Caki2 (cell line): ENCODE measurements at regions of chr7 and their contacts with region 1.

Region 1: GRCh38 chr7:26199301-26200037 is 1.1 kb downstream of the HNRNPA2B1 start:
- DNase-seq: peak; percentile 60

Region 2: DNA sequence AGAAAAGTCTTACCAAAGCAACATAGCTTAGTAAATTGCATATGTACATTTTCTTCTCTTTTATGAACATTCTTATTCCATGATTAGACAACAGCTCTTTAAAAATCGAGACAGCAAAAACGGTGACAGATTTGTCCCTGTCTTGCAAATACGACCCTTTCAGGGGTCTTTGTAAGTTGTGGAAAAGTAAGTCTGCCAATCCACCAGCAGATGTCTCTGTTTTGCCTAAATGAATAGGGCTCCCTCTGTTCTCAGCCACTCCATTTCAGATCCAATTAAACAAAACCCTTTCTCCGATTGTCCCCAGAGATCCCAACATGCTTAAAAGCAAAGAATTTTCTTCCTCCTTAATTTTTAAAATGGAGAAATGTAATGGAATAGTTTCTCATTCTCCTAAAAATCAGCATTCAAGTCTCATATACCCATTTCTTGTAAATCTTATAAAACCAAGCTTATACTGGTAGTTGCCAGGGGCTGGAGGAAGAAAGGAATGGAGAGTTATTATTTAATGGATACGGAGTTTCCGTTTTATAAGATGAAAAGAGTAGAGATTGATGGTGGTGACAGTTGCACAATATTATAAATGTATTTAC is 108.4 kb before region 1 on chr7:
- in situ Hi-C with region 1: loop called (anchors 10 kb)
- DNase-seq: peak; percentile 55